Activated T-helper 1 cell treated with anti-CD3 and anti-CD28 coated beads, Interleukin-12 subunit alpha, Interleukin-12 subunit beta, Interleukin-2, Interleukin-4 antibody, amounts not matched to agents 30 ng/mL and 10 ng/mL and 1 ng/mL, durations not matched to agents 14 hours and 24 hours and 36 hours (primary cell): ENCODE measurements at regions of chr3 and their contacts with region 1.

Region 1: DNA sequence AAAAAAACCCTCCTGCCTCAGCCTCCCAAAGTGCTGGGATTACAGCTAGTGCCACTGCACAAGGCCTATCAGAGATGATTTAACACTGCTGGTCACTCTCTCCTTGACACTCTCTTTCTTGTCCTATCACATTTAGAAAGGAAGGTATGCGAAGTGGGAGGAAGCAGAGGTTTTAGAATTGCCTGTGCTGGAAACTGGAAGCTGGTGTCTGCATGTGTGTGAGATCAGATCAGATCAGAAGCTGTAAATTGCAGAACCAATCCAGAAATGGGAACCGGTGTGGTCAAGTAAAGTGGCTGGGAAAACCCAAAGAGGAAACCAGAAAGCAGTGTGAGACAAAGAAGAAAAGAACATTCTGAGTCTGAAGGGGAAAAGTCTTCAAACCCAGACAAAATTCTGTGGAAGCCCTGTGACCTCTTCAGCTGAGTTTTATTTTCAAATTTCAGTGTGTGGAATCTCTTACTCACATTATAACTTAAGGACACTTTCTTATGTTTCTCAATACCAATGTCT is 2.8 kb downstream of the EFHB start:
- DNase-seq: peak; percentile 39
- H3K4me3 Mint-ChIP-seq: peak overlapping the region; percentile 50
- H3K27ac Mint-ChIP-seq: peak overlapping the region; percentile 95
- H3K4me1 Mint-ChIP-seq: peaks cover 38% of the 10 kb centered on the region
- H3K27me3 Mint-ChIP-seq: peaks cover 4% of the 10 kb centered on the region

Region 2: GRCh38 chr3:19885468-19885867 is 45.8 kb before region 1 on chr3:
- intact Hi-C with region 1: loop called (anchors 1 kb)
- DNase-seq: no peak
- H3K4me3 Mint-ChIP-seq: no peak overlapping the region
- H3K27ac Mint-ChIP-seq: no peak overlapping the region
- H3K4me1 Mint-ChIP-seq: peaks cover 11% of the 10 kb centered on the region
- H3K27me3 Mint-ChIP-seq: peaks cover 5% of the 10 kb centered on the region

Region 3: DNA sequence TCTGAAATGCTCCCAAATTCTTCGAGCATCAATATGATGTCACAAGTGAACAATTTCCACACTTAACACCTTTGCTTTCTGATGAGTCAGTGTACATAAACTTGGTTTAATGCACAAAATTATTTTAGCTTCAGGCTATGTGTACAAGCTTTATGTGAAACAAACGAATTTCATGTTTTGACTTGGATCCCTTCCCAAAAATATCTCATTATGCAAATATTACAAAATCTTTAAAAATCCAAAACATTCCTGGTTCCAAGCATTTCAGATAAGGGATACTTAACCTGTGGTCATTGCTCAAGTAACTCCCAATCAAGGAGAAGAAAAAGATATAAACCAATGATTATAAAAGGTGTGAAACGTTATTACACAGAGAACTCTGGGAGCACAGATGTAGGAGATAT is 40.8 kb after region 1 on chr3:
- intact Hi-C with region 1: no loop called
- DNase-seq: no peak
- H3K4me3 Mint-ChIP-seq: no peak overlapping the region
- H3K27ac Mint-ChIP-seq: no peak overlapping the region
- H3K4me1 Mint-ChIP-seq: peaks cover 34% of the 10 kb centered on the region
- H3K27me3 Mint-ChIP-seq: no peaks in the 10 kb centered on the region

Region 4: GRCh38 chr3:20039766-20040475 is 108.7 kb after region 1 on chr3 and contains the start of gene KAT2B:
- intact Hi-C with region 1: loop called (anchors 1 kb)
- DNase-seq: peak; percentile 75
- H3K4me3 Mint-ChIP-seq: peak within 1 kb of the TSS; percentile 99
- H3K27ac Mint-ChIP-seq: peak within 1 kb of the TSS; percentile 98
- H3K4me1 Mint-ChIP-seq: peaks cover 61% of the 10 kb centered on the region
- H3K27me3 Mint-ChIP-seq: no peaks in the 10 kb centered on the region
- total RNA-seq, gene KAT2B: 25.1 and 38.5 TPM in 2 replicates

Region 5: DNA sequence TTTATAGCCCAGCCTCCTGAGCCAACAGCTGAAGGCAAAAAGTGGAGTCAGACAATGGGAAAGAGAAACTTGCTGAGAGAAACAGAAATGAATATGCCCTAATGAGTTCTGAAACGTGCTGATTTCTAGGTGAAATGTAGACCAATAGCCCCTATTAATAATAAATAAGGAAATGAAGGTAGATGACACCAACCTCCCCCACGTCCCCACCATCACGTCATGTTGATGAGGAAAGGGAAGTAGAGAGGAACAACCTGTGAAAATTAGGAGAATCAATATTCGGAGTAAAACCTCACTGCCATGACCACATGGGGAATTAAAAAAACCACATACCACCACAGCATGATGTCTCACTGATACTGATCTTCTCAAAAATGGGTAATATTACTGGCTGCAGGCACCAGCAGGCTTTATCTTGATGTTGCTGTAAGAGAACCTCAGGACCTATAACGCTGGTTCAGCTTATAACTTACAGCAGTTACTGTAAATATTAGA is 173.0 kb after region 1 on chr3:
- intact Hi-C with region 1: loop called (anchors 1 kb)
- DNase-seq: peak; percentile 52
- H3K4me3 Mint-ChIP-seq: peak overlapping the region; percentile 52
- H3K27ac Mint-ChIP-seq: peak overlapping the region; percentile 93
- H3K4me1 Mint-ChIP-seq: peaks cover 79% of the 10 kb centered on the region
- H3K27me3 Mint-ChIP-seq: no peaks in the 10 kb centered on the region